ENCODE measurements at regions of chr21 and their contacts with region 1.

Region 1: DNA sequence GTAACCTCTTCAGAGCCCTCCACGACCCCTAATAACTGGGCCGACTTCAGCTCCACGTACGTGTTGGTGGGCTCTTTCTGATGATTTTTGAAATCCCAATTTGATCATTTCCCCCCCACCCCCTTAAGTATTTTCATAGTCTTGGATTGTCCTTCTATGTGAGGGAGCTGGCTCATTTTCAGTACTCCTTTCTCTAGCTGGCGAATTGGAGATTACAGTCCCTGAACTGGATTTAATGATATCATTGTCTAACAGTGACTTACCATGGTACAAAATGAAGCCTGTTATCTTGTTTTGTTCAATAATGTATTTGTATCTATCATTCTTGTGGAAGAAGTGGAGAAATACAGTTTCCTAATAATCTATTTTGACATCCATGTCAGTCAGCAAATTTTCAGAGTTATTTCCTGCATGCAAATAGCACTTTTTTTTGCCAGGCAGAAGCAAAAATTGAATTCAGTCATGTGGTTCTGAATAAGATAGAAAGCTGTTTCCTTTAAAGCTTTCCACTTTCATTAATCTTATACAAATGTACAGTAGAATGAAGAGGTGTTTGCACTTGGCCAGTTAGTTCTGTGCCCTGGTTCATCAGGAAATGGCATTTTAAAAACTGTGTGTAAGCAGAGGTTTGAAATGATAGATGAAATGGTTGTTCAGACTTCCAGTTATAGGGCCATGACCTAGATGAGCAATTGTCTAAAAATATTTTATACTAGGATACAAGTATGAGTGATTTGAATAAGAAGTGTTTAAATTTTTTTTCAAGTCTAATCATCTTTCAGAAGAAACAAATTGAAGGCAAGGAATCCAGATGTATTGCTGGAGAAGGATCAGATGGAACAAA is 104.2 kb downstream of the ATP5PO start:
- DNase-seq: peak; percentile 40
- H3K4me3 ChIP-seq: no peak overlapping the region
- H3K27ac ChIP-seq: no peak overlapping the region
- H3K4me1 ChIP-seq: peaks cover 12% of the 10 kb centered on the region
- H3K27me3 ChIP-seq: no peaks in the 10 kb centered on the region
- CTCF ChIP-seq: no peak
- POLR2A ChIP-seq: no peak

Region 2: GRCh38 chr21:33821503-33822322 is 10.3 kb after region 1 on chr21:
- CTCF ChIA-PET with region 1: interaction called, 10 read pairs
- POLR2A ChIA-PET with region 1: no interaction called
- dilution Hi-C with region 1: no loop called
- intact Hi-C with region 1: no loop called
- DNase-seq: no peak
- H3K4me3 ChIP-seq: no peak overlapping the region
- H3K27ac ChIP-seq: no peak overlapping the region
- H3K4me1 ChIP-seq: no peaks in the 10 kb centered on the region
- H3K27me3 ChIP-seq: no peaks in the 10 kb centered on the region
- CTCF ChIP-seq: no peak
- POLR2A ChIP-seq: no peak

Region 3: DNA sequence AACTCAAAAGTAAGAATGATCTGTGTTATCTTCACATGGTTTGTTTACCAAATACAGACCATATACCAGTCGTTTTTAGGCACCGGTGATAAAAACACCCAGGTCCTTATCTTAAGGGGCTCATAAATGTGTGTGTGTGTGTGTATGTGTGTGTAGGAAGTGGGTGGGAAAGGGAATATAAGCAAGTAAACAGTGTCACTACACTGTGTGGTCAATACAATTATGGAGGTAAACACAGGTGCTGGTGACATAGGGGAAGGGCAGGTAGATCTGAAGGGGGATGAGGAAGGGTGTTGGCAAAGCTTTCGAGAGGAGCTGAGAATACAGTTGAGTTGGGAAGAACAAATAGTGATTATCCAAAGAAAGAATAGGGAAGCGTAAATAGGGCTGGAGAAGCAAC is 242.9 kb after region 1 on chr21:
- CTCF ChIA-PET with region 1: no interaction called
- POLR2A ChIA-PET with region 1: no interaction called
- dilution Hi-C with region 1: no loop called
- intact Hi-C with region 1: no loop called
- DNase-seq: no peak
- H3K4me3 ChIP-seq: no peak overlapping the region
- H3K27ac ChIP-seq: no peak overlapping the region
- H3K4me1 ChIP-seq: no peaks in the 10 kb centered on the region
- H3K27me3 ChIP-seq: peaks cover 3 to 5% of the 10 kb centered on the region in 2 experiments
- CTCF ChIP-seq: no peak
- POLR2A ChIP-seq: no peak

Measured in endothelial cell of umbilical vein (primary cell).